Esophagus muscularis mucosa (tissue), 4 donors: ENCODE measurements at regions of chr9 and their contacts with region 1.

Region 1: DNA sequence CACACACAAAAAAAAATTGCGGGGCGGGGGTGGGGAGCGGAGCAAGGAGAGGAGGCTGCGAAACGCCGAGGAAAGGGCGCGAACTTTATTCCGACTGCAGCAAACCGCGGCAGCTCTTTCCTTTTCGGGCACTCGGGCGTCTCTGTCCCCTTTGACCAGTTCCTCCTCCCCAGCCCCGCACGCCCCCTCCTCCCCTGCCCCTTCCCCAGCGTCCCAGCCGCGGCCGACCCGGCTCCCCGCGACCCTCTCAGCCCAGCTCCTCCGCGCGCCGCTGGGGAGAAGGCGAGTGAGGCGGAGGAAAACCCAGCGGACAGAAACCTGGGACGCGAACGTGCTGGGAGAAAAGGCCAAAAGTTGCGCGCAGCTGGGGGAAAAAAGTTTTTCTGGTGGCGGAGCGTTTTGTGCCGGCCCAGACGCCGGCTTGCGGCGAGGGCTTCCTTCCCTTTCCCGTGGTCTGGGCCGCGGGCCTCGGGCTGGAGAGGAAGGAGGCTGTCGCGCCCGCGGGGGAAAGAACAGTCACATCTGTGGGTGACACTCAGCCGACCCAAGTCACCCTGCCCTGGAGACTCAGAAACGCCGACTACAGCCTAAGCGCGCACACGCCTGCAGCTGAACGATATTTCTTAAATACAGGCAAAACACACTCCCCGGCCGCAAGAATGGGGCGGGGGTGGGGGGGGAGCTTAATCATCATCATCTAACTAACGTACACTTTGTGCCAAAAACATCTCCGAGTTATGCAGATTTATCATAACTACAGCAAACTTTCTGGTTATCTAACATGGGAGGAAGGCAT is 1.1 kb upstream of the BNC2 start:
- DNase-seq: no peak
- H3K4me3 ChIP-seq: peak overlapping the region; percentile 80 to 94 (median 88)
- H3K27ac ChIP-seq: peak overlapping the region; percentile 89 to 97 (median 95)
- H3K4me1 ChIP-seq: peaks cover 10 to 31% (median 17%) of the 10 kb centered on the region in 4 donors
- H3K27me3 ChIP-seq: no peaks in the 10 kb centered on the region
- CTCF ChIP-seq: no peak
- EP300 ChIP-seq: no peak
- POLR2A ChIP-seq: peak; percentile 13

Region 2: GRCh38 chr9:16191691-16192402 is 679.7 kb before region 1 on chr9:
- intact Hi-C with region 1: loop called (anchors 5 kb)
- DNase-seq: peak; percentile 93
- H3K4me3 ChIP-seq: peak overlapping the region in 1 of 4 donors; percentile 30
- H3K27ac ChIP-seq: no peak overlapping the region
- H3K4me1 ChIP-seq: peaks cover 4 to 15% (median 11%) of the 10 kb centered on the region in 4 donors
- H3K27me3 ChIP-seq: no peaks in the 10 kb centered on the region
- CTCF ChIP-seq: peak; percentile 70 to 85 (median 71)
- EP300 ChIP-seq: no peak
- POLR2A ChIP-seq: no peak

Region 3: DNA sequence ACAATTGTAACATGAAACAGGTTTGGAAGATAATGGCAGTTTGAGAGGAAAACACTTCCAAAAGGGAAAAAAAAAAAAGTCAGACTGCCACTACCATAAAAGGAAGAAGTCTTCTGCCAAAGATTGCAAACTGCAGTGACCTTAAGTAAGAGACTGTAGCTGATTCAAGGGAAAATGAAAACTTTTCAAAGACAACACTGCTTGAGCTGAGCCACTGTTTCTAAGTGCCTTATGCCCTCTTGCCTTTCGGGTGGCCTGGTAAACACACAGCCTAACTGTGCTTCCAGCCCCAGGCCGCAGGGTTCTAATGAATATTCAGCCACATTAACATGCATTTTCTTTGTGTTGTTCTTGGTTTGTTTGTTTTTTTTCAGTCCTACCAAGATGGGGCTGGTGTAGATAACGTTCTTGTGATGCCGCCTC is 355.7 kb before region 1 on chr9:
- intact Hi-C with region 1: loop called (anchors 10 kb)
- DNase-seq: no peak
- H3K4me3 ChIP-seq: peak overlapping the region in 1 of 4 donors; percentile 5
- H3K27ac ChIP-seq: peak overlapping the region; percentile 71 to 76 (median 74)
- H3K4me1 ChIP-seq: peaks cover 13 to 64% (median 60%) of the 10 kb centered on the region in 4 donors
- H3K27me3 ChIP-seq: no peaks in the 10 kb centered on the region
- CTCF ChIP-seq: no peak
- EP300 ChIP-seq: no peak
- POLR2A ChIP-seq: no peak

Region 4: GRCh38 chr9:16705121-16705604 is 166.4 kb before region 1 on chr9:
- intact Hi-C with region 1: loop called (anchors 5 kb)
- DNase-seq: peak; percentile 95
- H3K4me3 ChIP-seq: peak overlapping the region; percentile 44 to 61 (median 49)
- H3K27ac ChIP-seq: peak overlapping the region; percentile 84 to 94 (median 88)
- H3K4me1 ChIP-seq: peaks cover 8 to 69% (median 61%) of the 10 kb centered on the region in 4 donors
- H3K27me3 ChIP-seq: no peaks in the 10 kb centered on the region
- CTCF ChIP-seq: no peak
- EP300 ChIP-seq: no peak
- POLR2A ChIP-seq: no peak

Region 5: GRCh38 chr9:16726718-16727451 is 144.7 kb before region 1 on chr9:
- intact Hi-C with region 1: loop called (anchors 5 kb)
- DNase-seq: peak; percentile 96
- H3K4me3 ChIP-seq: peak overlapping the region; percentile 58 to 71 (median 66)
- H3K27ac ChIP-seq: peak overlapping the region; percentile 87 to 96 (median 93)
- H3K4me1 ChIP-seq: peaks cover 3 to 77% (median 61%) of the 10 kb centered on the region in 4 donors
- H3K27me3 ChIP-seq: no peaks in the 10 kb centered on the region
- CTCF ChIP-seq: no peak
- EP300 ChIP-seq: no peak
- POLR2A ChIP-seq: peak; percentile 46

Region 6: GRCh38 chr9:16828340-16829281 is 42.9 kb before region 1 on chr9:
- intact Hi-C with region 1: loop called (anchors 5 kb)
- DNase-seq: no peak
- H3K4me3 ChIP-seq: peak overlapping the region; percentile 49 to 54 (median 50)
- H3K27ac ChIP-seq: peak overlapping the region; percentile 79 to 84 (median 81)
- H3K4me1 ChIP-seq: peaks cover 5 to 94% (median 70%) of the 10 kb centered on the region in 4 donors
- H3K27me3 ChIP-seq: no peaks in the 10 kb centered on the region
- CTCF ChIP-seq: no peak
- EP300 ChIP-seq: no peak
- POLR2A ChIP-seq: no peak

Region 7: GRCh38 chr9:17246770-17247169 is 375.2 kb after region 1 on chr9:
- intact Hi-C with region 1: no loop called
- DNase-seq: no peak
- H3K4me3 ChIP-seq: no peak overlapping the region
- H3K27ac ChIP-seq: no peak overlapping the region
- H3K4me1 ChIP-seq: no peaks in the 10 kb centered on the region
- H3K27me3 ChIP-seq: no peaks in the 10 kb centered on the region
- CTCF ChIP-seq: no peak
- EP300 ChIP-seq: no peak
- POLR2A ChIP-seq: no peak